Caco-2 (cell line): ENCODE measurements at regions of chr1 and their contacts with region 1.

Region 1: GRCh38 chr1:205485338-205486228 is 18.9 kb upstream of the CDK18 start:
- DNase-seq: peak; percentile 89 to 91
- H3K4me3 ChIP-seq: no peak overlapping the region
- H3K4me3 Mint-ChIP-seq: no peak overlapping the region
- H3K27ac Mint-ChIP-seq: no peak overlapping the region
- H3K4me1 ChIP-seq: 0 out of 2 replicates have a peak, but pooled peaks cover 3% of the 10 kb centered on the region
- H3K4me1 Mint-ChIP-seq: no peaks in the 10 kb centered on the region
- H3K27me3 ChIP-seq: no peaks in the 10 kb centered on the region; the same call in 1 of the 2 replicates
- H3K27me3 Mint-ChIP-seq: peaks cover 21% of the 10 kb centered on the region
- CTCF ChIP-seq: peak; percentile 94 to 95

Region 2: DNA sequence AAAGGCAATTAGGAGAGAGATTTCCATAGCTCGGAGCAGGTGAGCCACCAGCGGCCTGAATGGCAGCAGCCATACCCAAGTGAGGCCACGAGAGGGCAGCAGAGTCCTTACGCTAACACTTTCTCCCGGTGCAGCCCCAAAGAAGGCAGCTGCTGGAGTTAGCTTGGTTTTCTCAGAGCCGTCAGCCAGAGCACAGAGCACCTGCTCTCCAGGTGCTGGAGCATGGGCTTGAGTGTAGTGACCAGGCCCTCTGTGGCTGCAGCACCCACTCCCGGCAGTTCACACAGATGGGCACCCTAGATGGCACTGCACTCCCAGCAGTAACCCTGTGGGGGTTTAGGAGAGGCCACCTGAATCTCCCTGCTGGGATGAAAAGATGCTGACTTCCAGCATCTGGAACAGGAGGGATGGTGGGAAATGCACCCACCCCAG is 212.0 kb before region 1 on chr1:
- CTCF ChIA-PET with region 1: interaction called, 22 read pairs
- POLR2A ChIA-PET with region 1: no interaction called
- intact Hi-C with region 1: loop called (anchors 10 kb)
- DNase-seq: peak; percentile 87 to 88
- H3K4me3 ChIP-seq: no peak overlapping the region
- H3K4me3 Mint-ChIP-seq: no peak overlapping the region
- H3K27ac Mint-ChIP-seq: peak overlapping the region; percentile 59
- H3K4me1 ChIP-seq: peaks cover 40% of the 10 kb centered on the region
- H3K4me1 Mint-ChIP-seq: peaks cover 17% of the 10 kb centered on the region
- H3K27me3 ChIP-seq: no peaks in the 10 kb centered on the region
- H3K27me3 Mint-ChIP-seq: no peaks in the 10 kb centered on the region
- CTCF ChIP-seq: peak; percentile 96 to 97

Region 3: GRCh38 chr1:205354259-205354904 is 131.2 kb before region 1 on chr1:
- CTCF ChIA-PET with region 1: interaction called, 90 read pairs
- POLR2A ChIA-PET with region 1: no interaction called
- intact Hi-C with region 1: loop called (anchors 1 kb)
- DNase-seq: peak; percentile 57 to 63
- H3K4me3 ChIP-seq: no peak overlapping the region
- H3K4me3 Mint-ChIP-seq: no peak overlapping the region
- H3K27ac Mint-ChIP-seq: no peak overlapping the region
- H3K4me1 ChIP-seq: peaks cover 4% of the 10 kb centered on the region; the same call in 1 of the 2 replicates
- H3K4me1 Mint-ChIP-seq: peaks cover 6% of the 10 kb centered on the region
- H3K27me3 ChIP-seq: no peaks in the 10 kb centered on the region
- H3K27me3 Mint-ChIP-seq: peaks cover 11% of the 10 kb centered on the region
- CTCF ChIP-seq: peak; percentile 80 to 85

Region 4: DNA sequence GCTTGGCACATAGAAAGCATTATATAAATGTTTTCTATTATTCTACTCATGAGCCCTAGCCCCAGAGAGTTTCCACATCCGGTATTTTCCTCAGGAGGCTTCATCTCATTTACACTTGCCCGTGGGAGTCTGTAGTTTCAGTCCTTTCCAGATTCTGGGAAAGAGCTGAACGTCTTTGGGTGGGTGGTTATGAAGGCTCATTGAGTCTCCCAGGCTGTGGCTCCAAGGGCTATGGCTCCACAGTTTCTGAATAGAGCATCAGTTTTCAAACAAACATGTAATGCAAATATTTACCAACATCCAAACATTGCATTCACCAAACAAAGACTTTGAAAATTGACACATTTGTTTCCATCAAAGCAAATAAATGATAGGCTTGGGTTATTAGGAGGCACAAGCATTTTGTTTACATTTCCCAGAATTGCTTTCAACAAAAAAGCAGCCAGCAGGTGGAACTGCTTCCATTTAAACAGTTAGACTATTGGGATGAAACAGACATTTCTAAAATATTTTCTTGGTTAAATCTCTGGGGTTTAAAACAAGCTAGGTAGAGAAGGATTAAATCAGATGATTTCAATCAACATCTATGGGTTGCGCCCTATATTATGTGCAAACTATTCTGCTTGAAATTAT is 62.5 kb before region 1 on chr1:
- CTCF ChIA-PET with region 1: interaction called, 13 read pairs
- POLR2A ChIA-PET with region 1: no interaction called
- intact Hi-C with region 1: loop called (anchors 1 kb)
- DNase-seq: no peak
- H3K4me3 ChIP-seq: no peak overlapping the region
- H3K4me3 Mint-ChIP-seq: no peak overlapping the region
- H3K27ac Mint-ChIP-seq: no peak overlapping the region
- H3K4me1 ChIP-seq: no peaks in the 10 kb centered on the region
- H3K4me1 Mint-ChIP-seq: no peaks in the 10 kb centered on the region
- H3K27me3 ChIP-seq: no peaks in the 10 kb centered on the region; the same call in 1 of the 2 replicates
- H3K27me3 Mint-ChIP-seq: peaks cover 28% of the 10 kb centered on the region
- CTCF ChIP-seq: peak in 1 of 2 experiments; percentile 28

Region 5: DNA sequence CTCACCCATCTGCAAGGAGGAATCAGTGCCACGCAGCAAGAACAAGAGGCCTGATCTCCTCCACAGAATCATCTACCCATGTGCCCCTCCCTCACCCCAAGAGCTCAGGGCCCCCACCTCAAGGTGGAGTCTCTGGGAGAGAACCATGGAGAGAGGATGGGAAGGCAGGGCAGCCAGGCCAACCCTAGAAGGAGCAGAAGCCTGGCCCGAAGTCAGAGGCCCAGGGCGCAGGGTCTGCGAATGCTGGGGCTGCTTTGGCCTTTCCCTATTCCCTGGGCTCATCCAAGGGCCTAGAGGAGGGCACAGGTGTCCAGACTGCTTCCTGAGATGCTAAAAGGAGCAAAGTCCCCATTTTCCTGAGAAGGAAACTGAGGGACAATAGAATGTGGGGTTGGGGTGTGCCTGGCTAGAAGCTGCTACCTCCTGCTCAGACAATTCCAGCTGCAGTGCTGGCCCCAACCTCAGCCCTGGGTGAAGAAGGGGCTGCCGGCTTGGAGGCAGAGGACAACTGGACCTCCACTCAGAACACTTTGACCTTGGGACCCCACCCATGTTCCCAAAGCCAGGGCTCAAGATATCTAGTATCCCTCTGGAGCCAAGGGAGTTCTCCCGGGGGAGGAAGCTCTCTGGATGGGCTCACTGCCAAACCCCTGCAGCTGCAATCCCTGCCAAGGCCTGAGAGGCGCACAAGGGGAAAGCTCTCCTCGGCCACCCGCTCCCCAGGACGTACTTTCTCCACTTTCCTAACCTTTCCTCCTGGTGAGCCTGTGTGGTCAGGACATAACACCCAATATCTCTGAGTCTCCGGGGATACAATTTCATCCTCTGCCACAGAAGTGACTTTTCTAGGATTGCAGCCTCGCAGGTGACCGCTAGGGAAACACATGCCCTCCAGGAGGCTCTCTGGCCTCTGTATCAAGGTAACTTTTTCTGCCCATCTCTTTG is 47.1 kb before region 1 on chr1:
- CTCF ChIA-PET with region 1: interaction called, 11 read pairs
- POLR2A ChIA-PET with region 1: no interaction called
- intact Hi-C with region 1: no loop called
- DNase-seq: peak in 1 of 2 experiments; percentile 31
- H3K4me3 ChIP-seq: no peak overlapping the region
- H3K4me3 Mint-ChIP-seq: no peak overlapping the region
- H3K27ac Mint-ChIP-seq: no peak overlapping the region
- H3K4me1 ChIP-seq: no peaks in the 10 kb centered on the region
- H3K4me1 Mint-ChIP-seq: no peaks in the 10 kb centered on the region
- H3K27me3 ChIP-seq: no peaks in the 10 kb centered on the region
- H3K27me3 Mint-ChIP-seq: peaks cover 3% of the 10 kb centered on the region
- CTCF ChIP-seq: peak in 1 of 2 experiments; percentile 18

Region 6: GRCh38 chr1:205504311-205504984 is 18.9 kb after region 1 on chr1 and contains the start of gene CDK18:
- CTCF ChIA-PET with region 1: interaction called, 16 read pairs
- POLR2A ChIA-PET with region 1: no interaction called
- intact Hi-C with region 1: loop called (anchors 2 kb)
- DNase-seq: peak; percentile 77 to 89
- H3K4me3 ChIP-seq: peak within 1 kb of the TSS; percentile 55
- H3K4me3 Mint-ChIP-seq: peak within 1 kb of the TSS; percentile 95
- H3K27ac Mint-ChIP-seq: peak within 1 kb of the TSS; percentile 82
- H3K4me1 ChIP-seq: peaks cover 30% of the 10 kb centered on the region
- H3K4me1 Mint-ChIP-seq: peaks cover 16% of the 10 kb centered on the region
- H3K27me3 ChIP-seq: no peaks in the 10 kb centered on the region
- H3K27me3 Mint-ChIP-seq: no peaks in the 10 kb centered on the region
- CTCF ChIP-seq: no peak
- total RNA-seq, gene CDK18: 17.0 and 18.5 TPM in 2 replicates

Region 7: DNA sequence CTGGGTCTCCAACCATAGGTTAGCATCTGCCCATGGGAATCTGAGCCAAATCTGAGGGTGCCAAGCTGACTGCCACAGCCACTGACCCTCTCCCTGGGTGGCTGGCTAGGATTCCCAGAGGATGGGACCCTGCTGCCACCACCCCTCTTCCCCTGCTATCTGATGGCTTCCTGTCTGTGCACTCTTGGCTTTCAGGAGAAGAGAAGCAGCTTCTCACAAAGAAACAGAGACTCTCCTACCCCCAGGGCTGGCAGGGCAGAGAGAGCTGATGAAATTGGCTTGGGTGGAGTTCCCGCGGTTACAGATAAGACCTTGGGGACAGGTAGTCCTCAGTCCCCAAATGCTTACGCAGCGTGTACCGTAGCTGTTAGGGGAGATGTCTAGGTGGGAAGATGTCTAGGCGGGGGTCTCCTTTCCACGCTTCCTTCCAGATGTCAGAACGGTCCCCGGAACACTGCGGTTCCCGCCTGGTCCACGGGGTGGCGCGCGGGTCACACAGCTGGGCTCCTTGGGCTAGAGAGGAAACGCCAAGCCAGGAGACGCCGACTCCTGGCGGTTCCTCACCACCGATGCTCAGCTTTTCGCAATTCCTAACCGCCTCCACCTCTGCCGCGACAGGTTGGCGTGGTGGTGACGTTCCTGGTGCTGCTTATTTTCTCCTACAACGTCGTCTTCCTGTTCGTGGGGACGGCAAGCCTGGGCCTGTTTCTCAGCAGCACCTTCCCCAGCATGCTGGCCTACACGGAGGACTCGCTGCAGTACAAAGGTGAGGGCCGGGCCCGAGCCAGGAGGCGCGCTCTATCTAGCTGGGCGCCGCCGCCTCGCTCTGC is 106.2 kb after region 1 on chr1:
- CTCF ChIA-PET with region 1: interaction called, 3 read pairs
- POLR2A ChIA-PET with region 1: interaction called, 12 read pairs
- intact Hi-C with region 1: no loop called
- DNase-seq: peak; percentile 87 to 93
- H3K4me3 ChIP-seq: peak overlapping the region; percentile 38
- H3K4me3 Mint-ChIP-seq: peak overlapping the region; percentile 73
- H3K27ac Mint-ChIP-seq: no peak overlapping the region
- H3K4me1 ChIP-seq: no peaks in the 10 kb centered on the region
- H3K4me1 Mint-ChIP-seq: no peaks in the 10 kb centered on the region
- H3K27me3 ChIP-seq: no peaks in the 10 kb centered on the region
- H3K27me3 Mint-ChIP-seq: no peaks in the 10 kb centered on the region
- CTCF ChIP-seq: peak; percentile 97 to 98

Region 8: GRCh38 chr1:205664376-205665108 is 179.0 kb after region 1 on chr1:
- CTCF ChIA-PET with region 1: no interaction called
- POLR2A ChIA-PET with region 1: no interaction called
- intact Hi-C with region 1: no loop called
- DNase-seq: no peak
- H3K4me3 ChIP-seq: no peak overlapping the region
- H3K4me3 Mint-ChIP-seq: no peak overlapping the region
- H3K27ac Mint-ChIP-seq: no peak overlapping the region
- H3K4me1 ChIP-seq: peaks cover 18% of the 10 kb centered on the region
- H3K4me1 Mint-ChIP-seq: peaks cover 17% of the 10 kb centered on the region
- H3K27me3 ChIP-seq: no peaks in the 10 kb centered on the region
- H3K27me3 Mint-ChIP-seq: no peaks in the 10 kb centered on the region
- CTCF ChIP-seq: no peak